Activated CD4-positive, alpha-beta T cell treated with anti-CD3 and anti-CD28 coated beads, Interleukin-2, amount 10 ng/mL, durations not matched to agents 24 days and 14 days (primary cell): ENCODE measurements at regions of chr20 and their contacts with region 1.

Region 1: GRCh38 chr20:32535953-32536823 is 48.9 kb downstream of the NOL4L start:
- DNase-seq: peak; percentile 93
- H3K4me3 Mint-ChIP-seq: peak overlapping the region; percentile 79
- H3K27ac Mint-ChIP-seq: peak overlapping the region; percentile 89
- H3K4me1 Mint-ChIP-seq: peaks cover 69% of the 10 kb centered on the region
- H3K27me3 Mint-ChIP-seq: no peaks in the 10 kb centered on the region

Region 2: DNA sequence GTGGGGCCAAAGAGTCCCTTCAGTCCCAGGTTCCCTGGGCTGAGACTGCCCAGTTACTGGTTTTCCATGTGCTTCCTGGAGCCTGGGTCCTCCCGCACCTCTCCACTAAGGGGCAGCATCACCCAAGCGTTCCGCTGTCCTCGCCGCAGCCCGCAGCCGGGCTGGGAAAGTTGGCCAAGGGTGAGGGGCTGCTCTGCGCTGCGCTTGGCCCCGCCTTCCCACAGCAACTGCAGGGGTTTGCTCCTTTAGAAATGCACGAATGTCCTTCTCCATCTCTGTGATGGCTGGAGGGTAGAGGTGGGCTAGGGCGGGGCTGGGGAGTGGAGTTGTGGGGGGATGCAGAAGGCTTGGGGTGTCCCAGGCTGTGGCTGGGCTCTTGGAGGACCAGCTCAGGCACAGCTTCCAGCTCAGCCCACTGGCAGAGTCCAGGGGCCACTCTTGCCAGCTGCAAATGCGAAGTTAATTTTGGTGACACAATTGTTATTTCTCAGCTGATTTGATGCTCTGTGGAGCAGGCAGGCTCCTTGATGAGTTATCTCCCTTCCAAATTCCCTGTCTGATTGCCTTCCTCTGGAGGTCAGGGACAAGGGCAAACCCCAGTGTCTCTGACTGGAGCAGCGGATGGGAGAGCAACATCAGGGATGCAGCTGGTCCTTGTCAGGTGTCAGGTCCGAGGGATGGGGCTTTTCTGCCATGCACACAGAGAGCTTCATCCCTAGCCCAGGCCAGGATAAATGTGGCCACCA is 14.2 kb before region 1 on chr20:
- intact Hi-C with region 1: loop called (anchors 1 kb)
- DNase-seq: peak; percentile 91
- H3K4me3 Mint-ChIP-seq: peak overlapping the region; percentile 15
- H3K27ac Mint-ChIP-seq: peak overlapping the region; percentile 60
- H3K4me1 Mint-ChIP-seq: peaks cover 46% of the 10 kb centered on the region
- H3K27me3 Mint-ChIP-seq: no peaks in the 10 kb centered on the region

Region 3: DNA sequence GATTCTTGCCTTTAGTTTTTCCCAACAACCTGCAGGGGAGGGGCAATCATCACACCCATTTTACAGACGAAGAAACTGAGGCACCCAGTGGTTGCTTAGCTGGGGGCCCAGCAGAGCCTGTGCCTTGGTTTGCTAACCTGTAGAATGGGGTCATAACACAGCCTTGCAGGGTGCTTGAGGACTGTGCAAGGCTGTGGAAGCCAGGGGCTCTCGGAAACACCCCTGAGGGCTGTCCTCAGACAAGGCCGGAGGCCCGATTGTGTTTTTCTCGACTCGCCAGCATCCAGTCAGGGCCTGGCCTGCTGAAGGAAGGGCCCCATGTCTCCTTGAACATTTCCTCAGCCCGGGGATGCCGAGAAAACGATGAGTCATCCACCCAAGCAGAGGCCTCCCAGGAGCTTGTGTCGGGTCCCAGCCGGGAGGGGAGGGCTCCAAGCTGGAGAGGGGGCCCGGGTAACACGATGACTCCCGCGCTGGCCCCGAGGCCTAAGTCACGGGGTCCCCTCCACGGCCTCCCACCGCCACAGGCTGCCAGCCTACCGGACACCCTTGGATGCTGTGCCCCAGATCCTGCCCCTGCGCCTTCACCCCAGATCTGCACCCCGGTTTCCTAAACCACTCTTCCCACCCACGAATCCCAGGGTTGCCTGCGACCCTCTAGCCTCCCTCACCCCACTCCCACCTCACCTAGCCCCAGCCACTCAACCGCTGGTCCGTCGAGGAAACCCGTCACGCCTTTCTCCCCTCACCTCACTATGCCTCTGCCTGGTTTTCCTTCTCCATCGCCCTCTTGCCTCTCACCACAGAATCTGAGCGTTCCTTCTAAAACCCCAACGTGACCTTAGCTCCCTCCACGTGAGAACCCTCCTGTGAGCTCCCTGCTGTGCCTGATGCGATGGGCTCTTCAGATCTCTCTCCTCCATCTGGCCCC is 38.4 kb after region 1 on chr20:
- intact Hi-C with region 1: no loop called
- DNase-seq: peak; percentile 71
- H3K4me3 Mint-ChIP-seq: no peak overlapping the region
- H3K27ac Mint-ChIP-seq: peak overlapping the region; percentile 68
- H3K4me1 Mint-ChIP-seq: peaks cover 15% of the 10 kb centered on the region
- H3K27me3 Mint-ChIP-seq: no peaks in the 10 kb centered on the region

Region 4: DNA sequence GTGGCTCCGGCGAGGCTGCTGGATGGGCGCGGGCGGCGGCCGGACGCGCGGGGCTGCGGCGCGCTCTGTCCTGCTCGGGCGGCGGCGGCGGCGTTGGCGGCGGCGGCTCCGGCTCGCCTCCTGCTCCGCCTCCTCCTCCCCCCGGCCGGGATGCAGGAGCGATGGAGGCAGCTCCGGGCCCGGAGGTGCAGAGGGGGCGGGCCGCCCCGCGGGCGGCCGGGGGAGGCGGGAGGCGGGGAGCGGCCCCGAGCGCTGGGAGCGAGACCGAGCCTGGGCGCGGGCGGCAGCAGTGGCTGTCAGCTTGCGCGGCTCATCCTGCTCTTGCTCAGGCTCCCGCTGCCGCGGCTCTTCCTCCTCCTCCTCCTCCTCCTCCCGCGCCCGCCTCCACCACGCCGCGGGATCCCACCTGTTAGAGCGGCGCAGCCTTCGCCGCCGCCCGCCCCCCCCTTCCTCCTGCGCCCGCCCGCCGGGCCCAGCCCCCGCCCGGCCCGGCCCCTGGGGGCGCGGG is 48.9 kb after region 1 on chr20 and contains the start of gene NOL4L:
- intact Hi-C with region 1: loop called (anchors 2 kb)
- DNase-seq: peak; percentile 79
- H3K4me3 Mint-ChIP-seq: peak within 1 kb of the TSS; percentile 81
- H3K27ac Mint-ChIP-seq: peak within 1 kb of the TSS; percentile 77
- H3K4me1 Mint-ChIP-seq: peaks cover 34% of the 10 kb centered on the region
- H3K27me3 Mint-ChIP-seq: peaks cover 25% of the 10 kb centered on the region
- total RNA-seq, gene NOL4L: 13.0 and 18.0 TPM in 2 replicates